Gastrocnemius medialis (tissue), 4 donors: ENCODE measurements at regions of chr19 and their contacts with region 1.

Region 1: GRCh38 chr19:1540365-1540925 is 16.6 kb downstream of the PLK5 start:
- DNase-seq: no peak
- ATAC-seq: no peak
- H3K4me3 ChIP-seq: no peak overlapping the region
- H3K27ac ChIP-seq: peak overlapping the region in 1 of 4 donors; percentile 22
- H3K4me1 ChIP-seq: no peaks in the 10 kb centered on the region
- H3K27me3 ChIP-seq: peaks cover 0 to 36% (median 26%) of the 10 kb centered on the region in 3 donors
- CTCF ChIP-seq: no peak
- POLR2A ChIP-seq: no peak

Region 2: DNA sequence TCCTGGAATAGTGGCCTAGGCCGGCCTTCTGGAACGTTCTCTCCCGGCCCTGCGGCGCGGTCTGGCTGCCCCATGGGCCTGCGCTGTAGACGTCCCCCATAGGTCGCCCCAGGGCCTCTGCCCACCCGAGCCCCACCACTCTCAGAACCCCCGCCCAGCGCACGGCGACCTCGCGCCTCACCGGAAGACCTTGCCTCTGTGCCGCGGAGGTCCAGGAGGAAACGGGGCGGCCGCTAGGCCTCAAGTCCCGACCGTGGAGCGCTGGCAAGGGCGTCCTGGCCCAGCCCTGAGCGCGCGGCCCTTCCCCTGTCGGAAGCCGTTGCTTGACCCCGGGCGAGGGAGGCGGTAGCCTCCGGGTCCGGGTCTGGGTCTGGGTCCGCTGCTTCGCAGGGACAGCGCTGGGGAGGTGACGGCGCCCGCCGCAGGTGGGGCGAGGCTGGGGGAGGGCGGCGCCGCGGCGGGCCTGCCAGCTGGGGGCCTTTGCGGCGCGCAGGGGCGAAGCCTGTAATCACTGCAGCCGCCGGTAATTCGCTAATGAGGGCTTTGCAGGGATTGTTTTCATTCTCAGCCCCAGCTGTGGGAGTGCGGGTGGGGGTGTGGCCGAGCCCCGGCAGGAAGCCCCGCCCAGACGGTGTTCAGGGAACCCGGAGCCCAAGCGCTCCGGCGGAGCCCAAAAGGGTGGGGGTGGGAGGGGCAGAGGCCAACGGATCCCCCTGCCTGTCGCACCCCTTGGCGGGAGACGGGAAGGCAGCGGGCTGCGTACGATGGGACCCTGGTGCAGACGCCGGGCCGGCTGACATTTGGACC is 70.0 kb before region 1 on chr19:
- in situ Hi-C with region 1: no loop called
- intact Hi-C with region 1: no loop called
- DNase-seq: no peak
- ATAC-seq: no peak
- H3K4me3 ChIP-seq: peak overlapping the region; percentile 26 to 52 (median 42)
- H3K27ac ChIP-seq: no peak overlapping the region
- H3K4me1 ChIP-seq: peaks cover 11 to 49% of the 10 kb centered on the region in 2 donors
- H3K27me3 ChIP-seq: peaks cover 72 to 78% (median 72%) of the 10 kb centered on the region in 3 donors
- CTCF ChIP-seq: no peak
- POLR2A ChIP-seq: no peak

Region 3: GRCh38 chr19:1507763-1508509 is 32.5 kb before region 1 on chr19:
- in situ Hi-C with region 1: no loop called
- intact Hi-C with region 1: no loop called
- DNase-seq: peak; percentile 91 to 95
- ATAC-seq: peak; percentile 95 to 96
- H3K4me3 ChIP-seq: peak overlapping the region; percentile 42 to 68 (median 59)
- H3K27ac ChIP-seq: peak overlapping the region; percentile 82 to 99 (median 92)
- H3K4me1 ChIP-seq: peaks cover 4 to 27% of the 10 kb centered on the region in 2 donors
- H3K27me3 ChIP-seq: peaks cover 0 to 4% (median 2%) of the 10 kb centered on the region in 3 donors
- CTCF ChIP-seq: peak in 1 of 5 experiments; percentile 23
- POLR2A ChIP-seq: peak; percentile 45 to 47

Region 4: GRCh38 chr19:1672038-1672768 is 131.8 kb after region 1 on chr19:
- in situ Hi-C with region 1: loop called in 3 of 4 experiments (anchors 5 to 10 kb)
- intact Hi-C with region 1: no loop called
- DNase-seq: no peak
- ATAC-seq: peak in 1 of 2 donors; percentile 30
- H3K4me3 ChIP-seq: no peak overlapping the region
- H3K27ac ChIP-seq: no peak overlapping the region
- H3K4me1 ChIP-seq: peaks cover 0 to 10% of the 10 kb centered on the region in 2 donors
- H3K27me3 ChIP-seq: peaks cover 82 to 92% (median 85%) of the 10 kb centered on the region in 3 donors
- CTCF ChIP-seq: peak; percentile 52 to 83 (median 80)
- POLR2A ChIP-seq: no peak

Region 5: DNA sequence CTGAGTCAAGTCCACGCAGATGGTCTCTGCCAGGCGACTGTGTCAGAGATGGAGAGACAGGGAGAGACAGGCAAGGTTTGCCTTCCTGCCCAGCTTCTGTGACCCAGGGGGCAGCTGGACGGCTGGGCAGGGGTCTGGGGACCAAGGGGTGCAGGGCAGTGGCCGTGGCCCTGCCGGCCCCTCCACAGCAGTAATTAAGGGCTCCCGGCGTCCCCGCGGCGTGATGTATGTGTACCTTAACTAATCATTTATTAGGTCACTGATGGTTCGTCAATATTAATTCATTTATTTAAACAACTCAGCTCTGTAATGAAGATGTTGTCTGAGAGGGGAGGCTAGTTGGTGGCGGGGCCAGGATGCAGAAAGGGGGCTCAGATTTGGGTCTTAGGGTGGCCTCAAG is 140.5 kb after region 1 on chr19:
- in situ Hi-C with region 1: loop called in 2 of 4 experiments (anchors 10 kb)
- intact Hi-C with region 1: no loop called
- DNase-seq: no peak
- ATAC-seq: no peak
- H3K4me3 ChIP-seq: no peak overlapping the region
- H3K27ac ChIP-seq: no peak overlapping the region
- H3K4me1 ChIP-seq: no peaks in the 10 kb centered on the region
- H3K27me3 ChIP-seq: peaks cover 57 to 74% (median 64%) of the 10 kb centered on the region in 3 donors
- CTCF ChIP-seq: no peak
- POLR2A ChIP-seq: no peak

Region 6: GRCh38 chr19:1767464-1767933 is 227.1 kb after region 1 on chr19:
- in situ Hi-C with region 1: loop called in 3 of 4 experiments (anchors 10 to 25 kb)
- intact Hi-C with region 1: no loop called
- DNase-seq: no peak
- ATAC-seq: no peak
- H3K4me3 ChIP-seq: no peak overlapping the region
- H3K27ac ChIP-seq: no peak overlapping the region
- H3K4me1 ChIP-seq: no peaks in the 10 kb centered on the region
- H3K27me3 ChIP-seq: peaks cover 70 to 95% (median 76%) of the 10 kb centered on the region in 3 donors
- CTCF ChIP-seq: peak; percentile 65 to 91 (median 86)
- POLR2A ChIP-seq: no peak